Gastrocnemius medialis (tissue), 4 donors: ENCODE measurements at regions of chr5 and their contacts with region 1.

Region 1: DNA sequence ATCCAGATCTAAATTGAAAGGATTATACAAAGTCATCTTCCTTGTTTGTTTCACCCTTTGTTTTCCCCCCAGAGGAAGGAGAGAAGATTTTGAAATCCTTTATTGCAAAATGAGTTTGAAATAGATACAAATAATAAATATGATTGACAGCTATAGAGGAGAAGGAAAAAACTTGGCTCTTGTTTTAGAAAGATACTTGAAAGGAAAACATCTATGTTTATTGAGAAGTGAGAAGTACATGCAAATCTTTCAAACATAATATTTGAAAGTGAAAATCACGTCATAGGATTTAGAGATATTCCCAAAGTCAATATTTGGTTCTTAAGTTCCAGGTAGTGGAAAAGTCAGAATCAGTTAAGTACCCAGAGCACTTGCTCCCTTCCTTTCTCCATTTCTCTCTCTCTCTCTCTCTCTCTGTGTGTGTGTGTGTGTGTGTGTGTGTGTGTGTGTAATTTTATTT is 27.2 kb downstream of the PAM start:
- DNase-seq: no peak
- ATAC-seq: peak; percentile 46 to 57
- H3K4me3 ChIP-seq: peak overlapping the region in 2 of 4 donors; percentile 6 to 11
- H3K27ac ChIP-seq: peak overlapping the region; percentile 65 to 78 (median 76)
- H3K4me1 ChIP-seq: peaks cover 49 to 59% of the 10 kb centered on the region in 2 donors
- H3K27me3 ChIP-seq: no peaks in the 10 kb centered on the region
- CTCF ChIP-seq: no peak
- POLR2A ChIP-seq: no peak

Region 2: GRCh38 chr5:102090770-102091381 is 691.5 kb before region 1 on chr5:
- in situ Hi-C with region 1: no loop called
- intact Hi-C with region 1: no loop called
- DNase-seq: no peak
- ATAC-seq: no peak
- H3K4me3 ChIP-seq: no peak overlapping the region
- H3K27ac ChIP-seq: no peak overlapping the region
- H3K4me1 ChIP-seq: no peaks in the 10 kb centered on the region
- H3K27me3 ChIP-seq: no peaks in the 10 kb centered on the region
- CTCF ChIP-seq: no peak
- POLR2A ChIP-seq: no peak

Region 3: DNA sequence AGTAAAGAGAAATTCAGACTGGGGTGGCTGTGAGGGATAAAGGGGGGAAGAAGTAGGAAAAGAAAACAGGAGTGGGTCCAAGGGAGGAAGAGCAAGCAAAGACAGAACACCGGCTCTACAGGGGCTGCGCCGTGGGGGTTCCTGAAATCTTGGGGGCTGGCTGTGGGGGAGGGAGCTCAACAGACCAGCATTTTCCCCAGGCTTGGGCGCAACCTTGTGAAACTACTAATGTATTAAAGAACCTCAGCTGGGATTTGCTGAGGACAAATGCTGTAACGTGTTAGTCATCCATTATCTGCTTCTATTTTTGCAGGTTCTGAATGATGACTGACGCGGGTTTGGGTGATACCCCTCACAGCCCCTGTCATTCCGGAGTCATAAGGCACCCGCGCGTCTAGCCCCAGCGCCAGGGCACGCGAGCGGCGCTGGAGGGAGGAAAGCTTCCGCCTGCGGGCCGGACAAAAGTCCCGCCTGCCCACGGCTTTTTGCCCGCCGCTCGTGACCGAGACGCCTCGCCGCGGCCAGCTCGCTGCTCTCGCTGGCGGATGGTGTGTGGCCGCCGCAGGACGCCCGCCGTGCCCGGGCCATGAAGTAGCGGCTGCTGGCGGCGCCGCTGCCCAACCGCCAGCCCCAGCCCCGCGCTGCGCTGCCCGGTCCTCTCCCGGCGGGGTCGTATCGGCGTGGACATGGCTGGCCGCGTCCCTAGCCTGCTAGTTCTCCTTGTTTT is 83.3 kb after region 1 on chr5:
- in situ Hi-C with region 1: no loop called
- intact Hi-C with region 1: loop called (anchors 2 kb)
- DNase-seq: peak; percentile 76 to 79
- ATAC-seq: peak; percentile 92 to 95
- H3K4me3 ChIP-seq: peak overlapping the region; percentile 67 to 76 (median 71)
- H3K27ac ChIP-seq: peak overlapping the region; percentile 84 to 94 (median 92)
- H3K4me1 ChIP-seq: peaks cover 51 to 62% of the 10 kb centered on the region in 2 donors
- H3K27me3 ChIP-seq: no peaks in the 10 kb centered on the region
- CTCF ChIP-seq: no peak
- POLR2A ChIP-seq: peak; percentile 57 to 84

Region 4: GRCh38 chr5:102971697-102972293 is 189.5 kb after region 1 on chr5:
- in situ Hi-C with region 1: loop called (anchors 5 to 25 kb)
- intact Hi-C with region 1: loop called (anchors 5 kb)
- DNase-seq: no peak
- ATAC-seq: peak; percentile 48 to 70
- H3K4me3 ChIP-seq: no peak overlapping the region
- H3K27ac ChIP-seq: peak overlapping the region in 1 of 4 donors; percentile 38
- H3K4me1 ChIP-seq: peaks cover 27 to 38% of the 10 kb centered on the region in 2 donors
- H3K27me3 ChIP-seq: no peaks in the 10 kb centered on the region
- CTCF ChIP-seq: peak in 3 of 5 experiments; percentile 41 to 54 (median 53)
- POLR2A ChIP-seq: no peak